Gastrocnemius medialis (tissue), 4 donors: ENCODE measurements at regions of chr1 and their contacts with region 1.

Region 1: DNA sequence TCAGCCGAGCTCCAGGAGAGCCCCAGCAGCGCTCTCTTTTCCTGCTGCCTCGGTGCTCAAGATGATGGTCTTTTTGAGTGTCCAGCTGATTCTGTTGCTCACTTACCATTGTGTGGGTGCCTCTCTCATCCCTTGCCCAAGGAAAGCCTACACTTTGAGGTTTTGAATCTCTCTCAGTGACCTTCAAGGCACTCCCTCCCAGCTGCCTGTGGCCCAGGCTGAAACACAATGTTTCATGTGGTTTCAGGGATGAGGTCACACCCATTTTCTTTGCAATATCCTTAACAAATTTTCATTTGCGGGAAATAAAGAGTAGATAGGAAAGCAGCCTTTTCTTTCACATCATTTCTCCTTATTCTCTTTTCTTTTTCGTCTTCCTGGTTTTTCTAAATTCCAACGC is 12.6 kb upstream of the MRPS14 start:
- DNase-seq: no peak
- ATAC-seq: no peak
- H3K4me3 ChIP-seq: no peak overlapping the region
- H3K27ac ChIP-seq: no peak overlapping the region
- H3K4me1 ChIP-seq: no peaks in the 10 kb centered on the region
- H3K27me3 ChIP-seq: no peaks in the 10 kb centered on the region
- CTCF ChIP-seq: no peak
- POLR2A ChIP-seq: no peak

Region 2: DNA sequence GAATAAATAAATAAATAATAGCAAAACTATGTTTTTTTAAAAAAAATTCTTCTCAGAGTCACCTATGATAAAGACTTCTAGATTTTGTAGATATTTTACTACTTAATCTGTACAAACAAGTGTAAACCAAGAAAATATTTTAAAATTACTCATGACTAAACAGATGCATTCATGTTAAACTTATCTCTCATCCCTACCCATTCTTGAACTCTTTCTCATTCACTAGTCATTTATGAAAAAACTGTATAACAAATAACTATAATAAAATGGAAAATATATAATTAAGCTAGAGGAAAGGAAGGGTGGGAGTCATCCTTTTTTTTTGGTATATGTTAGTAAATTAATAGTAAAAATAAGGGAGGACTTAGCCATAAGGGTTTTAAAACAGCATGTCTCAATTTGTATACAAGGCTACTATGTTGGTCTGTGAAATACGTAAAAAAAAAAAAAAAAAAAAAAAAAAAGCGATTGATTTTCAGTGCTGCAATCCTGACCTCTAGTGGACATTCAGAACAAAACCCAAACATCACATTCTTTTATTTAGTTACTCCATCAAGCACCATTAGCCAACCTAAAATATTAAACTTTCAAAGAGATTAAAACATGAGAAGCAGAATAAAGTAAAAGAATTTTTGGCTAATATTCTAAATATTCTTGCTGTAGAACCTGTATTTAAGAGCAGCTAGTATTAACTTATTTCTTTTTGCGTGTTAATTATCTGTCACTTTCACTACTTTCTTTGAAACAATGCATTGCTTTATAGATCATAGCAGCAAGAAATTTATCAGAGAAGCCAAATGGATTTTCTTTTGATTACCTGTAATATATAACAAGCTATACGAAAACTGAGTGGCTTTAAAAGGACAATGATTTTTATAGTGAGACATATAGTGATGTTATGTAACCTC is 292.0 kb before region 1 on chr1:
- in situ Hi-C with region 1: no loop called
- intact Hi-C with region 1: no loop called
- DNase-seq: no peak
- ATAC-seq: peak in 1 of 2 donors; percentile 30
- H3K4me3 ChIP-seq: no peak overlapping the region
- H3K27ac ChIP-seq: no peak overlapping the region
- H3K4me1 ChIP-seq: no peaks in the 10 kb centered on the region
- H3K27me3 ChIP-seq: no peaks in the 10 kb centered on the region
- CTCF ChIP-seq: peak in 4 of 5 experiments; percentile 15 to 66 (median 48)
- POLR2A ChIP-seq: no peak

Region 3: GRCh38 chr1:174982971-174983689 is 52.7 kb before region 1 on chr1:
- in situ Hi-C with region 1: no loop called
- intact Hi-C with region 1: no loop called
- DNase-seq: no peak
- ATAC-seq: no peak
- H3K4me3 ChIP-seq: no peak overlapping the region
- H3K27ac ChIP-seq: no peak overlapping the region
- H3K4me1 ChIP-seq: no peaks in the 10 kb centered on the region
- H3K27me3 ChIP-seq: no peaks in the 10 kb centered on the region
- CTCF ChIP-seq: peak; percentile 44 to 65 (median 58)
- POLR2A ChIP-seq: no peak

Region 4: DNA sequence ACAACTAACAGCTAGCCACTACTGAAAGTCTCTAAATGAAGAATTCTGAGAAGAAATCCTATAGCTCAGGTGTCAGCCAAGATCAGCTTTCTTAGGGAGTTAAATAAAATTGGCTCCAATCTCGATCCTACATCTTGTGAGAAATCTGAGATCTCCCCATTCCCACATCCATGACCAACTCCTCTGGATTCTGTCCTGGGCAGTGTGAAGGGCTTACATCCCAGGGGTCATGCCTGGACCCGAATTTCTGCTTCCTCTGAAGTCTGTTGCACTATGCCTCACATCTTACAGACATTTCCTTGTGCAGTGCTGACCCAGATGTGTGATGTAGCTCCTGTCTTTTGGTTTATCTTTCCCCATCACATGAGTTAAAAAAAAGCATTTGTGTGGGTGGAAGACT is 27.0 kb after region 1 on chr1:
- in situ Hi-C with region 1: no loop called
- intact Hi-C with region 1: no loop called
- DNase-seq: no peak
- ATAC-seq: no peak
- H3K4me3 ChIP-seq: no peak overlapping the region
- H3K27ac ChIP-seq: no peak overlapping the region
- H3K4me1 ChIP-seq: no peaks in the 10 kb centered on the region
- H3K27me3 ChIP-seq: no peaks in the 10 kb centered on the region
- CTCF ChIP-seq: no peak
- POLR2A ChIP-seq: no peak

Region 5: GRCh38 chr1:175124861-175125260 is 89.0 kb after region 1 on chr1:
- in situ Hi-C with region 1: loop called (anchors 5 to 10 kb)
- intact Hi-C with region 1: no loop called
- DNase-seq: no peak
- ATAC-seq: peak; percentile 22 to 29
- H3K4me3 ChIP-seq: no peak overlapping the region
- H3K27ac ChIP-seq: peak overlapping the region in 1 of 4 donors; percentile 56
- H3K4me1 ChIP-seq: peaks cover 6 to 15% of the 10 kb centered on the region in 2 donors
- H3K27me3 ChIP-seq: no peaks in the 10 kb centered on the region
- CTCF ChIP-seq: no peak
- POLR2A ChIP-seq: no peak

Region 6: DNA sequence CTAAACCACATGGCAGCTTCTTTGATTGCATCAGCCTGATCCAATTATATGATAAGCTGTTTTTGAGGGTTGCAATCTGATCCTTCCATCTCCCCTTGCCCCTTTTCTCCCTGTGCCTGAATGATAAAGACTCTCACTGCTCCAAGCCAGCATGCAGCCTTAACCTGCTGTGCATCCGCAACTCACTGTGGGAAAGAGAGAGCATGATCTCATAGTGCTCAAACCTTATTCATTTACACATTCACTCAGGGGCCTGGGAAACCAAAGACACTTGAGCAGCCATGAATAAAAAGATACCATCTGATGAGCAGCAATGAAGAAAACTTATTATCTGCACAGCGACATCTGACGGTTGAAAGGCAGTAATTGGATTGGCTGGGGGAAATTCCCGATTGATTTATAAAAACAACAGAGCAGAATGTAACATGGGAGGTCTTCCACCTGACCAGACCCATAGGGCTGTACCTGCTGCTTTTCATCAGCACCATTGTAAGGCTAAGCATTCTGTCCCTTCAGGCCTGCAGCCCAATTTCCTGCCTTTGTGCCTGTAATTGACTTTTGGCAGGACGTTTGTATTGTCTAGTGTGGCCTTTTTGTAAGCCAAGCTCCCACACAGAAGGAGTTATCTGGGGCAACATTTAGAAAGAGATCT is 94.3 kb after region 1 on chr1:
- in situ Hi-C with region 1: loop called in 3 of 4 experiments (anchors 10 kb)
- intact Hi-C with region 1: no loop called
- DNase-seq: no peak
- ATAC-seq: peak in 1 of 2 donors; percentile 28
- H3K4me3 ChIP-seq: no peak overlapping the region
- H3K27ac ChIP-seq: peak overlapping the region in 3 of 4 donors; percentile 29 to 40 (median 30)
- H3K4me1 ChIP-seq: peaks cover 6 to 29% of the 10 kb centered on the region in 2 donors
- H3K27me3 ChIP-seq: no peaks in the 10 kb centered on the region
- CTCF ChIP-seq: no peak
- POLR2A ChIP-seq: no peak